Activated naive CD4-positive, alpha-beta T cell treated with anti-CD3 and anti-CD28 coated beads, Interleukin-2, amount 10 ng/mL, durations not matched to agents 7 days and 5 days (primary cell): ENCODE measurements at regions of chr6 and their contacts with region 1.

Region 1: GRCh38 chr6:1436334-1437306 is 47.2 kb downstream of the FOXF2 start:
- DNase-seq: peak; percentile 60
- H3K4me3 Mint-ChIP-seq: no peak overlapping the region
- H3K27ac Mint-ChIP-seq: no peak overlapping the region
- H3K4me1 Mint-ChIP-seq: no peaks in the 10 kb centered on the region
- H3K27me3 Mint-ChIP-seq: peaks cover 57% of the 10 kb centered on the region

Region 2: GRCh38 chr6:1424306-1424928 is 12.2 kb before region 1 on chr6:
- CTCF ChIA-PET with region 1: interaction called, 10 read pairs
- DNase-seq: peak; percentile 45
- H3K4me3 Mint-ChIP-seq: no peak overlapping the region
- H3K27ac Mint-ChIP-seq: no peak overlapping the region
- H3K4me1 Mint-ChIP-seq: no peaks in the 10 kb centered on the region
- H3K27me3 Mint-ChIP-seq: peaks cover 39% of the 10 kb centered on the region